PC-3 (cell line): ENCODE measurements at regions of chr16 and their contacts with region 1.

Region 1: DNA sequence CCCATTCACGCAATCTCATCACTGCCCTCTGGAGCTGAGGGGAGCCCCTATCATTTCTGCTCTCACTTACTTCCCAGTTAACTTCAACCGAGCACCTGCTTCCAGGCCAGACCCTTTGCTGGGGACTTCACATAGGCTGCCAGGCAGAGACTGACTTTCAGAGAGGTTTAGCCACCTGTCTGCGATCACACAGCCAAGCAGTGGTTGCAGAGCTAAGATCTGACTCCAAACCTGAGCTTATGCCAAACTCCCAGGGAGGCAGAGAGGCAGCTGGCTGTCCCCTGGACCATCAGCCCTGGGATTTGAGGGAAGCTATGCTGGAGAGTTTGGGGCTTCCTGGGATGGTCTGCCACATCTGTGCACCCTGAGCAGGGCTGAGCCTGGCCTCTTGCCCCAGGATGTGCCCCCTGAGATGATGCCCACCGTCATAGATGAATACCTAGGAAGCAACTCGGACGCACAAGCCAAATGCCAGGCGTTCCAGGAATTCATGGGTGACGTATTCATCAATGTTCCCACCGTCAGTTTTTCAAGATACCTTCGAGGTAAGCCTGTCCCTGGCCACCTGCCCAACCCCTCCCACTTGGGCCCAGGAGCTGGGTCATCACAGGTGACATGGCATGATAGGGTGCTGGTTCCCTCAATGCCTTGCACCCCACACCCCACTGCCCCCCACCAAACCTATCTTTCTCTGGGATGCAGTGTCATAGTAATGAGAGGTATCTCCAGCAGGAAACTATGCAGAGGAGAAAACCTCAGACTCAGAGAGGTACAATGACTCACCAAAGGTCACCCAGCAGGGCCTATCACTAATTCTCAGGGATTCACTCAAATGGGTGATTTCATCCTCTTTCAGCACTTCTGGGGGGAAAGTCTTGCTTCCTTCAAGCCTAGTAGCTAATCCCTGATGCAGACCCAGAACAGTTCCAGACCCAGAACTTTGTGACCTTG is 10.0 kb downstream of the CES3 start:
- DNase-seq: peak; percentile 25
- ATAC-seq: no peak
- H3K4me3 ChIP-seq: no peak overlapping the region
- H3K27ac ChIP-seq: no peak overlapping the region
- H3K4me1 ChIP-seq: no peaks in the 10 kb centered on the region
- H3K27me3 ChIP-seq: no peaks in the 10 kb centered on the region
- CTCF ChIP-seq: no peak

Region 2: DNA sequence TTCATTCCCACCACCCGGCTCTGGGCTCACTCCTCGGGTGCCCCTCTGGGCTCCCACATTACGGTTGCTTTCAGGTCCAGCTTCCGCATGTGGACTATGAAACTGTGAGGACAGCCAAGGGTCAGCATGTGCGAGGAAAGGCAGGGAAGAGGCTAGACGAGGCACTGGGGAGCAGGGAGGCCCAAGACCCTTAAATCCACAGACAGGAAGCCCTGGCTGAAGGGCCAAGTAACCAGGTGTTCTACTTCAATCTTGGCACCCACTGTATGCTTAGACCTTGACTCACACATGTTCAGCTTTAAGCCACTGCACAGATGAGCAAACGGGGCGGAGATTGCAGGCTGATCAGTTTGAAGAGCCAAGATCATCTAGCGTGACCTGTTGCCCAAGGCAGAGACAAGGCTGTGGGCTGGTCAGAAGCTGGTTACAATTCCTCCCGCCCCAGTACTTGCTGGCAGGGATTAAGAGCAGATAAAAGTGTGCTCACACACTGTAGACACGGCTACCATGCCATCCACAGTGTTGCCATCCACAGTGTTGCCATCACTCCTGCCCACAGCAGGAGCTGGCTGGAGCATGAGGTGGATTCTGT is 17.2 kb after region 1 on chr16 and contains the start of gene CES4A:
- CTCF ChIA-PET with region 1: no interaction called
- POLR2A ChIA-PET with region 1: interaction called, 11 read pairs
- intact Hi-C with region 1: no loop called
- DNase-seq: peak; percentile 39
- ATAC-seq: peak; percentile 48
- H3K4me3 ChIP-seq: no peak within 1 kb of the TSS
- H3K27ac ChIP-seq: no peak within 1 kb of the TSS
- H3K4me1 ChIP-seq: no peaks in the 10 kb centered on the region
- H3K27me3 ChIP-seq: no peaks in the 10 kb centered on the region
- CTCF ChIP-seq: no peak
- total RNA-seq, gene CES4A: 2.1 and 2.6 TPM in 2 replicates